ENCODE measurements at regions of chr7 and their contacts with region 1.

Region 1: DNA sequence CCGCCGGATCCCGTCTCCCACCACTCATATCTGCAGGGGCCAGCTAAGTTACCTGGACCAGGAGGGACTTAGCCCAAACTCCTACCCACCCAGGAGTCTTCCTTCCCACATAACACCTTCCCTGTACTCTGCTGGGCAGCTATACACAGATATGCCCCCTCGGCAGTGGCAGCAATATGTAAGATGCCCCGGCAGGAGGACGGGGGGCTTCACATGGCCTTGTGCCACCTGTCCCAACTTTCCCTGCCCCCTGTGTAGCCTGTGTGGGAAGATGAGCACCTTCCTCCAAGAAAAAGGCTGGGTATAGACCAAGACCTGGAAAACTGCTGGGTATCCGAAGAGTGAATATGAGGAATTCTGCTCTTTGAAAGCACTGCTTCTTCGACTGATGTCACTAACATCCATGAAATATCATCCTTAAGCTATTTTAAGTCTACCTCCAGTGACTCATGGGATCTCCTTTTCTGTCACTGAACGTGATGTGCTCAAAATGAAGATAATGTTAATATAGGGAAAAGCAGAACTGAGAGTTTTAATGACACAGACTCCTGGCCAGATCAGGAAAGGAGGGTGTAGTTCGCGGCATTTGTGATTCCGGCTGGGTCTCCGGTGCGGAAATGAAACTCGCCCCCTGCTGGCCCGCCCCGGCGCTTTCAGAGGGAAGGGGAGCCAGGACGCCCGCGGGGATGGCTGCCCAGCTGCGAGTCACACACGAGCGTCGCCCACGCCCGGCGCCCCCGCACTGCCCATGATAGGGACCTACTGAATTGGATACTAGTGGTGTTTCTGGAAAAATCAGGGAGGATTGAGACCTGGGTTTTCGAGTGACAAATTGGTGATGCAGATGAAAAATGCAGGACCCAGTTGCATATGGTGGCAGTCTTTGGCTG is 256.9 kb upstream of the NFE2L3 start:
- DNase-seq: peak; percentile 32
- H3K4me3 ChIP-seq: no peak overlapping the region
- H3K27ac ChIP-seq: no peak overlapping the region
- H3K4me1 ChIP-seq: peaks cover 16% of the 10 kb centered on the region
- H3K27me3 ChIP-seq: peaks cover under 1 to 11% of the 10 kb centered on the region in 2 experiments
- CTCF ChIP-seq: peak; percentile 78 to 79
- POLR2A ChIP-seq: no peak

Region 2: DNA sequence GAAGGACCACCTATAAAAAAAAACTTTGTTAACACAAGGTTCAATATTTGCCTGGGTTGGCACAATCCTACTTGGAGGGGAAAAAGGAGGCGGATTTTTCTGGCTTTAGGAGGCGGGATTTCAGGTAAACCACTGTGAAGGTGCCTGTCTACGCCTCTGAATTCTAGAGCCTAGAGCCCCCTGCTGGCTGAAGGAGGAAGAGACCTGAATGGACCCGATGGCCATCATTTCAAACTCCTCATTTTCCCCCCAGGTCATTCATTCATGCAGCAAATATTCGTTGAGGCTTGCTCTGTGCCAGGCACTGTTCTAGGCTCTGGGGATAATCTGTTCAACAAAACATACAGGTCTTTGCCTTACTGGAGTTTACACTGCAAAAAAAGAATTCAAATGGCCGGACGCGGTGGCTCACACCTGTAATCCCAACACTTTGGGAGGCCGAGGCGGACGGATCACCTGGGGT is 166.6 kb after region 1 on chr7:
- CTCF ChIA-PET with region 1: interaction called, 31 read pairs
- POLR2A ChIA-PET with region 1: no interaction called
- dilution Hi-C with region 1: no loop called
- intact Hi-C with region 1: loop called (anchors 1 kb)
- DNase-seq: peak; percentile 49
- H3K4me3 ChIP-seq: no peak overlapping the region
- H3K27ac ChIP-seq: no peak overlapping the region
- H3K4me1 ChIP-seq: no peaks in the 10 kb centered on the region
- H3K27me3 ChIP-seq: peaks cover 8 to 11% of the 10 kb centered on the region in 2 experiments
- CTCF ChIP-seq: peak; percentile 78 to 86
- POLR2A ChIP-seq: no peak

Region 3: DNA sequence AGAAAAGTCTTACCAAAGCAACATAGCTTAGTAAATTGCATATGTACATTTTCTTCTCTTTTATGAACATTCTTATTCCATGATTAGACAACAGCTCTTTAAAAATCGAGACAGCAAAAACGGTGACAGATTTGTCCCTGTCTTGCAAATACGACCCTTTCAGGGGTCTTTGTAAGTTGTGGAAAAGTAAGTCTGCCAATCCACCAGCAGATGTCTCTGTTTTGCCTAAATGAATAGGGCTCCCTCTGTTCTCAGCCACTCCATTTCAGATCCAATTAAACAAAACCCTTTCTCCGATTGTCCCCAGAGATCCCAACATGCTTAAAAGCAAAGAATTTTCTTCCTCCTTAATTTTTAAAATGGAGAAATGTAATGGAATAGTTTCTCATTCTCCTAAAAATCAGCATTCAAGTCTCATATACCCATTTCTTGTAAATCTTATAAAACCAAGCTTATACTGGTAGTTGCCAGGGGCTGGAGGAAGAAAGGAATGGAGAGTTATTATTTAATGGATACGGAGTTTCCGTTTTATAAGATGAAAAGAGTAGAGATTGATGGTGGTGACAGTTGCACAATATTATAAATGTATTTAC is 195.9 kb after region 1 on chr7:
- CTCF ChIA-PET with region 1: interaction called, 17 read pairs
- POLR2A ChIA-PET with region 1: no interaction called
- dilution Hi-C with region 1: no loop called
- intact Hi-C with region 1: loop called (anchors 1 kb)
- DNase-seq: peak; percentile 74
- H3K4me3 ChIP-seq: no peak overlapping the region
- H3K27ac ChIP-seq: no peak overlapping the region
- H3K4me1 ChIP-seq: no peaks in the 10 kb centered on the region
- H3K27me3 ChIP-seq: peaks cover 0 to 3% of the 10 kb centered on the region in 2 experiments
- CTCF ChIP-seq: peak; percentile 54 to 62
- POLR2A ChIP-seq: no peak

Region 4: DNA sequence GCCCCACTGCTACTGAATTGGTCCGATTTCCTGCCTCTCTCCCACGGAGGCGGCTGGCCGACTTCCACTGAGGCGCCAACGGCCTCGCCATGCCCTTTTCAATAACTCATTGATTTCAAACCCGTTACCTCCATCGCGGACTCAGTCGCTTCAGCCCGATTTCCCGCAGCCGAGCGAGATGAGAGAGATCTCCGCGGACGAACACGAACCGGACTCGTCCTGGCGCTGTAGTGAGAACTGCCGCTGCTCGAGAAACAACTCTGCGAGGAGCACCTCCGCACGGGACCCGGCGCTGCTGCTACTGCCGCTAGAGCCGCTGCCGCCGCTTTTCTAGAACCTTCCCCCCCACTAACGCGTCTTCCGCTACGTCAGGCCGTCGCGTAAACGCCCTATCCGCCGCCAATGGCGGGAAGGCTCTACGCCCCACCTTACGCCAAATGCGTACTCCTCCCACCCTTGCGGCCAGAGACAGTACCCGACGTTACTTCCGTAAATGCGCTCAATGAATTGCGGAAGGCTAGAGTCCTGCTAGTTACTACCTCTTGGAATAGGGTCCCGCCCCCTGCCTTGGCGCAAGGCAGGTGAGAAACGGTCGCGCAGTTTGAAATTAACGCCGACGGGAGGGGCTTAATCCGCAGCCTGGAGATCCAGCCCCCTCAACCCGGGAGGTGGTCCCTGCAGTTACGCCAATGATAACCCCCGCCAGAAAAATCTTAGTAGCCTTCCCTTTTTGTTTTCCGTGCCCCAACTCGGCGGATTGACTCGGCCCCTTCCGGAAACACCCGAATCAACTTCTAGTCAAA is 305.5 kb after region 1 on chr7 and contains the start of gene HNRNPA2B1:
- CTCF ChIA-PET with region 1: interaction called, 15 read pairs
- POLR2A ChIA-PET with region 1: no interaction called
- dilution Hi-C with region 1: no loop called
- intact Hi-C with region 1: loop called (anchors 2 kb)
- DNase-seq: peak; percentile 99
- H3K4me3 ChIP-seq: peak within 1 kb of the TSS; percentile 98 to 100 (median 98)
- H3K27ac ChIP-seq: peak within 1 kb of the TSS; percentile 97
- H3K4me1 ChIP-seq: peaks cover 40% of the 10 kb centered on the region
- H3K27me3 ChIP-seq: no peaks in the 10 kb centered on the region
- CTCF ChIP-seq: no peak
- POLR2A ChIP-seq: peak; percentile 100
- total RNA-seq, gene HNRNPA2B1: 703 and 717 TPM in 2 replicates

Region 5: GRCh38 chr7:26348234-26348851 is 453.2 kb after region 1 on chr7:
- CTCF ChIA-PET with region 1: interaction called, 11 read pairs
- POLR2A ChIA-PET with region 1: no interaction called
- dilution Hi-C with region 1: no loop called
- intact Hi-C with region 1: no loop called
- DNase-seq: no peak
- H3K4me3 ChIP-seq: no peak overlapping the region
- H3K27ac ChIP-seq: no peak overlapping the region
- H3K4me1 ChIP-seq: no peaks in the 10 kb centered on the region
- H3K27me3 ChIP-seq: peaks cover 0 to 7% of the 10 kb centered on the region in 2 experiments
- CTCF ChIP-seq: no peak
- POLR2A ChIP-seq: no peak

Region 6: GRCh38 chr7:26853788-26854393 is 958.7 kb after region 1 on chr7:
- CTCF ChIA-PET with region 1: no interaction called
- POLR2A ChIA-PET with region 1: no interaction called
- dilution Hi-C with region 1: no loop called
- intact Hi-C with region 1: loop called (anchors 10 kb)
- DNase-seq: peak; percentile 69
- H3K4me3 ChIP-seq: no peak overlapping the region
- H3K27ac ChIP-seq: no peak overlapping the region
- H3K4me1 ChIP-seq: peaks cover 34% of the 10 kb centered on the region
- H3K27me3 ChIP-seq: no peaks in the 10 kb centered on the region
- CTCF ChIP-seq: peak; percentile 24 to 26
- POLR2A ChIP-seq: no peak

Measured in endothelial cell of umbilical vein (primary cell).